Gastrocnemius medialis (tissue), 4 donors: ENCODE measurements at regions of chr11 and their contacts with region 1.

Region 1: DNA sequence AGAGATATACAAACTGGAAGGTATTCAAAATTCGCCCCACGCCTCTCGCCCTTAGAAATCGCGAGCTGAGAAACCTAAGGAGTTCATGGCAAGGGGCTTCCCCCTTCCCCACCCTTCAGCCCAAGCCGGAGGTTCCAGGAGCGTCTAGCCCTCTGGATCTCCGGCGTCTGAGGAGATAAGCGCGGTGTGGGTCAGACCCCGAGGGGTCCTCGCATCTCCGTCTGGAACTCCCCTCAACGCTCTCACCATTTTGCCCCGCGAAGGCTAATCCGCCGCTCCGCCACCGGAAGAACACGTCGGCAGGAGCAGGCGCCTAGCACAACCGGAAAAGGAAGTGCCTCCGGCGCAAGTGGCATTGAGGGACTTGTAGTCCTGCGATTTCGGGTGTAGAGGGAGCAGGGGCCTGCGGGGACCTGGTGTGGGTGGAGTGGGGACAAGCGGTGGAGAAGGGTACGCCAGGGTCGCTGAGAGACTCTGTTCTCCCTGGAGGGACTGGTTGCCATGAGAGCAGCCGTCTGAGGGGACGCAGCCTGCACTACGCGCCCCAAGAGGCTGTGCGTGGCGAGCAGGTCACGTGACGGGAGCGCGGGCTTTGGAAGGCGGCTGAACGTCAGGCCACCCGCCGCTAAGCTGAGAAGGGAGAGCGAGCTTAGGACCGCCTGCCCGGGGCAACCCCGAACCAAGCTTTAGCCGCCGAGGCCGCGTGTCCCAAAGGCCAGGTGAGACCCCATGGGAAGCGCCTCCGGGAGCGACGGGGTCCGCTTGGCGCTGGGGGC is at the starts of genes FEN1 and TMEM258:
- DNase-seq: peak; percentile 81 to 83
- ATAC-seq: peak; percentile 95 to 98
- H3K4me3 ChIP-seq: peak within 1 kb of the TSS; percentile 73 to 97 (median 88)
- H3K27ac ChIP-seq: peak within 1 kb of the TSS; percentile 90 to 98 (median 96)
- H3K4me1 ChIP-seq: peaks cover 20 to 22% of the 10 kb centered on the region in 2 donors
- H3K27me3 ChIP-seq: no peaks in the 10 kb centered on the region
- CTCF ChIP-seq: peak in 3 of 5 experiments; percentile 35 to 39 (median 37)
- POLR2A ChIP-seq: peak; percentile 58
- total RNA-seq, gene FEN1: 7.4 to 15.7 (median 9.5) TPM
- total RNA-seq, gene TMEM258: 36.5 to 51.8 (median 47.2) TPM

Region 2: DNA sequence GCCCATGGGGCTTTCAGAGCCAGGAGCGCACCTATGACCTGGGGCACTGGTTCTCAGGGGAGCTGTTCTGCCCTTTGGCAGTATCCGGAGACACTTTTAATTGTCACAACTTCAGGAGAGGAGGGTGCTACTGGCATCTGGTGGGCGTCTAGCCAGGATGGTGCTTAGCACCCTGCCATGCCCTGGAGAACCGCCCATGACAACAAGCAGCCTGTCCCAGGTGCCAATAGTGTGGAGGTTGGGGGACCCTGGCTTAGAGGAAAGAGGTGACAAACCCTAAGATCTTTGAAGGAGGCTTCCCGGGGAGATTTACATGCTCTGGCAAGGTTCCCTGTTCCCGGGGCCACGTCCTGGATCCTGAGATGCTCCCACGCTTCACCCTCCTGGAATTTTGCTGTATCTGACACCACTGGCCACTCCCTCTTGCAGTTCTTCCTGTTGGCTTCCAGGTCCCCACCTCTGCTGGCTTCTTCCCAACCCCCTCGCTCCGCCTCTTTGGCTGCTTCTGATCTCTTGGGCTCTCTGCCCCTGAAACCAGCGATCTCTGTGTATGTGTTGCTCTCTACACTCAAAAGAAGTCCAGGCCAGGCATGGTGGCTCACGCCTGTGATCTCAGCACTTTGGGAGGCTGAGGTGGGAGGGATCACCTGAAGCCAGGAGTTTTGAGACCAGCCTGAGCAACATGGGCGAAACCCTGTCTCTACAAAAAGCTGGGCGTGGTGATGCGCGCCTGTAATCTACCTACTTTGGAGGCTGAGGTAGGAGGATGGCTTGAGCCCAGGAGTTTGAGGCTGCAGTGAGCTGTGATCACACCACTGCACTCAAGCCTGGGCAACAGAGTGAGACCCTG is 67.8 kb after region 1 on chr11:
- in situ Hi-C with region 1: no loop called
- intact Hi-C with region 1: no loop called
- DNase-seq: peak in 1 of 2 donors; percentile 46
- ATAC-seq: peak in 1 of 2 donors; percentile 30
- H3K4me3 ChIP-seq: no peak overlapping the region
- H3K27ac ChIP-seq: no peak overlapping the region
- H3K4me1 ChIP-seq: no peaks in the 10 kb centered on the region
- H3K27me3 ChIP-seq: no peaks in the 10 kb centered on the region
- CTCF ChIP-seq: no peak
- POLR2A ChIP-seq: no peak

Region 3: DNA sequence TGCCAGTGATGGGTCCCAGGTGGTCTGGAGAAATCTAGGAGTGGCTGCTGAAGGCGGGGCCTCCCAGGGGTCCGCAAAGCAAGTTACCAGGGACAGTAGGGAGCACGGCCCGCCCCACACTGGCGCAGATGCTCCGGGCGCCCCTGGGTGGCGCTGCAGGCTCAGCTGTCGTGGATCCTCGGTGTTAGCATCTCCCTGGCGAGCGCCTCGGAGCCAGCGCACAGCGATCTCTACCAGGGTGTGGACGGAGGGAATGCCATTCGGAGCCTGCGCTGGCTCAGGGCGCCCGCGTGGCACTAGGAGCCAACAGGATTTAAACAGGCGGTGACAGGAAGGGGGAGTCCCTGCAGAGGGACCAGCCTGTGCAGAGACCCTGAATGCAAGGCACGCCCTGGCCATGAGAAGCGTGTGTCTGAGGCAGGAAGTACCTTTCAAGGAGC is 78.7 kb after region 1 on chr11:
- in situ Hi-C with region 1: no loop called
- intact Hi-C with region 1: loop called (anchors 5 kb)
- DNase-seq: peak; percentile 47 to 62
- ATAC-seq: peak; percentile 87 to 88
- H3K4me3 ChIP-seq: no peak overlapping the region
- H3K27ac ChIP-seq: peak overlapping the region; percentile 48 to 70 (median 66)
- H3K4me1 ChIP-seq: peaks cover 0 to 5% of the 10 kb centered on the region in 2 donors
- H3K27me3 ChIP-seq: no peaks in the 10 kb centered on the region
- CTCF ChIP-seq: peak; percentile 87 to 96 (median 93)
- POLR2A ChIP-seq: no peak

Region 4: GRCh38 chr11:61899146-61899841 is 106.8 kb after region 1 on chr11:
- in situ Hi-C with region 1: loop called in 1 of 4 experiments (anchors 10 kb)
- intact Hi-C with region 1: no loop called
- DNase-seq: peak; percentile 57 to 74
- ATAC-seq: peak; percentile 80 to 88
- H3K4me3 ChIP-seq: no peak overlapping the region
- H3K27ac ChIP-seq: peak overlapping the region in 3 of 4 donors; percentile 1 to 30 (median 29)
- H3K4me1 ChIP-seq: no peaks in the 10 kb centered on the region
- H3K27me3 ChIP-seq: no peaks in the 10 kb centered on the region
- CTCF ChIP-seq: peak; percentile 98 to 100 (median 99)
- POLR2A ChIP-seq: no peak

Region 5: DNA sequence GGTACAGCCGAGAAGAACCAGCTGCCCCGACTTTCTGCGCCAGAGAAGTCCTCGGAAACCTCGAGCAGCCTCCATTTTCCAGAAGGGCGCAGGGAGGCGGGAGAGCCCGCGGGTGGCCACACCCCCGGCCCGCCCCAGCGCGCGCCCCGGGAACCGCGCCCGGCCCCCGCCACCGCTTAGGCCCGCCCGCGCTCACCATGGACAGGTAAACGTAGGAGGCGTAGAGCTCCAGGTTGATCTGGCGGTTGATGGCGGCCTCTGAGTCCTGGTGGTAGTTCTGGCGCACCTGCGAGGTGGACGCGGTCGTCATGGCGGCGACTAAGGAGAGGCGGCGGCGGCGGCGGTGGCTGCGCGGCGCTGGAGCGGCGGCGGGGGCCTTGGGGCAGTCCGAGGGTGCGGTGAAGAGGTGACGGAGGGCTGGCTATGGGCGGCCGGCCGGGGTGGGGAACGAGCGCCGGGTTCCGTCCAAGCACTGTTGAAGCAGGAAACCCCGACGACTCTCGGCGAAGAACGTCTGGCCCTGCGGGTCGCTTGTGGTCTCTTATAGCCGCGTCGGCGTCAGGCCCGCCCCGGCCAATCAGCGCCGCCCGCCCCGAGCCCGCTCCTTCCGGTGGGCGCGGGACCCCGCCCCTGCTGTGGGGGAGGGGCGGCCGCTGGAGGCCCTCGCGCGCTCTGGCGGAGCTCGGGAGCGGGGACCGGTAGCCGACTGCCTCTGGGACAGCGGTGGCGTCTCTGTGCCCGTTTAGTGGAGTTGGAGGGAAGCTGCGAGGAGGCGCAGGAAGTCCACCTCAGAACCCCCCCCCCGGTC is 174.8 kb after region 1 on chr11 and contains the start of gene FTH1:
- in situ Hi-C with region 1: no loop called
- intact Hi-C with region 1: loop called (anchors 5 kb)
- DNase-seq: peak; percentile 89 to 90
- ATAC-seq: peak; percentile 52 to 63
- H3K4me3 ChIP-seq: peak within 1 kb of the TSS; percentile 83 to 94 (median 91)
- H3K27ac ChIP-seq: peak within 1 kb of the TSS; percentile 93 to 100 (median 99)
- H3K4me1 ChIP-seq: peaks cover 55 to 63% of the 10 kb centered on the region in 2 donors
- H3K27me3 ChIP-seq: no peaks in the 10 kb centered on the region
- CTCF ChIP-seq: no peak
- POLR2A ChIP-seq: peak; percentile 100
- total RNA-seq, gene FTH1: 1,340 to 3,366 (median 1,705) TPM

Region 6: DNA sequence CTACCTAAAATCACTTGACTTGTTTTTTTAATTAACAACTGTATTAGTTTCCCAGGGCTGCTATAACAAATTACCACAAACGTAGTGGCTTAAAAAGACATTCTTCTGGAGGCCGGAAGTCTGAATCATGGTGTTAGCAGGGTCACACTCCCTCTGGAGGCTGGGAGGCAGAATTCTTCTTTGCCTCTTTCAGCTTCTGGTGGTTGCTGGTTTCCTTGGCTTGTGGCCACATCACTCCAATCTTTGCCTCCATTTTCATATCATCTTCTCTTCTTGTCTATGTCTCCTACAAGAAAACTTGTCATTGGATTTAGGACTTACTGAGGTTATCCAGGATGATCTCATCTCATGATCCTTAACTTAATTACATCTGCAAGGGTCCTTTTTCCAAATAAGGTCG is 324.0 kb after region 1 on chr11:
- in situ Hi-C with region 1: loop called in 1 of 4 experiments (anchors 10 kb)
- intact Hi-C with region 1: no loop called
- DNase-seq: no peak
- ATAC-seq: no peak
- H3K4me3 ChIP-seq: no peak overlapping the region
- H3K27ac ChIP-seq: no peak overlapping the region
- H3K4me1 ChIP-seq: no peaks in the 10 kb centered on the region
- H3K27me3 ChIP-seq: no peaks in the 10 kb centered on the region
- CTCF ChIP-seq: no peak
- POLR2A ChIP-seq: no peak

Region 7: DNA sequence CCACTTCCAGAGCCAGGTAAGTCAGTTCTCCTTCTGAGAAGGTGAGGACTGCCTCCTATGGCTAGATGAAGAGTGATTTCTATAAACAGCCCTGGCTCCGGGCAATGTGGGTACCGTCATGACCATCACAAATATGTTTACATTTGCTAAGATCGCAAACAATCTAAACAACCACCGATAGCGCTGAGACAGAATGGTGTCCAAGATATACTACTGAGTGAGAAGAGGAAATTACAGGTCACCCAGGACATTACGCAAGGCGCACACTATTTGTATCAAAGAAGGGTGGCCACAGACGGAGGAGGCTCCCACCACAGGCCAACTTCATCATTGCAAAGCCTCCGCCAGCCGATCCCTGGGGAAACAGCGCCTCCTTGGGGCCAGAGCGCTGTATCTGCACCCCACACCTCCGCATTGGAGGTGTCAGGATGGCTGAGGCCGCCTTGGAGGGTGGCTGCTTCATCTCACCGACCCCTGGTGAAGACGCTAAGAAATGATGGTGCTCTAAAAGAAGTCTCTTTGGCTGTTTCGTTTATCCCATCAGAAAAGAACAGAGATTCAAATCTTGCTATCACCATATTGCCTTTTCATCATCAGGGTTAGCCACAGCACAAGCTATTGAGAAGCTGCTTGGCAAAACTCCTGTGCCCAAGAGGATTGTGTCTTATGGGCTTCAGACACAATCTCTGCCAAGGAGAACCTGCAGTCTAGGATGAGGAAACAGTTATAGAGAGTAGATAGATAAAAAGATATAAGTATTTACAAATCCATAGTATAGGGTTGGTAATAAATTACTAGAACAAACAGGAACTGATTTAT is 532.4 kb after region 1 on chr11:
- in situ Hi-C with region 1: loop called in 1 of 4 experiments (anchors 25 kb)
- intact Hi-C with region 1: no loop called
- DNase-seq: no peak
- ATAC-seq: no peak
- H3K4me3 ChIP-seq: no peak overlapping the region
- H3K27ac ChIP-seq: no peak overlapping the region
- H3K4me1 ChIP-seq: no peaks in the 10 kb centered on the region
- H3K27me3 ChIP-seq: peaks cover 0 to 4% (median 0%) of the 10 kb centered on the region in 3 donors
- CTCF ChIP-seq: peak; percentile 11 to 38 (median 29)
- POLR2A ChIP-seq: no peak